Sciatic nerve (tissue), 2 donors: ENCODE measurements at regions of chr1 and their contacts with region 1.

Region 1: DNA sequence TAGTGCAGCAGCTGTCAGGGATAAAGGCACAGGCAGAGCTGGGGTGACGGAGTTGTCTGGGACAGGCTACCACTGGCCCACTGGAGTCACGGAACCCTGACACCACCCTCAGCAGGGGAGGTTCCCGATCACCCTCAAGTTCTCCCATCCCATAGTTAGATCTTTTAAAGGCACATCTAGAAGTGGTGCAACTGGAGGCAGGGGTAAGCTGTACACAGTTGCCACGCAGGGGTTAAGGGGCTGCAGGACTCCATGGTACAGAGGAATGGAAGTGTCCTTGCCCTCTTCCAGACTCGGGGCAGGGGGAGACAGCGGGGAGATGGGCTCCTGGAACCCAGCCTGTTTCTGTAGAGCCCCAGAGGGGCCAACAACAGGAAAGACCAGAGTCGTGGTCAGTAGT is 13.3 kb downstream of the CC2D1B start:
- DNase-seq: no peak
- ATAC-seq: no peak

Region 2: DNA sequence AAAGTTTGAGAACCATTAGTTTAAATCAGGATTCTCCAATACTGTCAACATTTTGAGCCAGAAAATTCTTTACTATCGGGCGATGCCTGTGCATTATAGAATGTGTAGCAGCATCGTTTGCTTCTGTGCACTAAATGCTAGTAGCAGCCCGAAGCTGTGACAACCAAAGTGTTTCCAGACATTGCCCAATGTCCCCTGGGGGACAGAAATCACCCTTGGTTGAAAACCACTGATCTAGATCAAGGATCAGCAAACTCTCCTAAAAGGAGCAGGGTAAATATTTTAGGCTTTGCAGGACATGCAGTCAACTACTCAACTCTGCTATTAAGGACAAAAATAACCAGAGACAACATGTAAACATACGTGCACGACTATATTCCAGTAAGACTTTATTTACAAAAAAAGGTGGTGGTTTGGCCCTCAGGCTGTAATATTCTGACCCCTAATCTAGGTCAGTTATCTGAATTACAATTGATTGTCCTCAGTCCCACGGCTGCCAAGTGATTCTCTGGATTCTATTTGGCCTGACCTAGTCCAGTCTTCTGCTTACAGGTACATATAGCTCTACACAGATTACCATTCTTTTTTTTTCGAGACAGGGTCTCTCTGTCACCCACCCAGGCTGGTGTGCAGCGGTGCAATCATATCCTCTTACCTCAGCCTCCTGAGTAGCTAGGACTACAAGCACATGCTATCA is 1403.3 kb before region 1 on chr1:
- intact Hi-C with region 1: loop called (anchors 5 kb)
- DNase-seq: no peak
- ATAC-seq: no peak